Activated B cell treated with CpG ODN at 0.5 μM for 24 hours (primary cell): ENCODE measurements at regions of chr3 and their contacts with region 1.

Region 1: DNA sequence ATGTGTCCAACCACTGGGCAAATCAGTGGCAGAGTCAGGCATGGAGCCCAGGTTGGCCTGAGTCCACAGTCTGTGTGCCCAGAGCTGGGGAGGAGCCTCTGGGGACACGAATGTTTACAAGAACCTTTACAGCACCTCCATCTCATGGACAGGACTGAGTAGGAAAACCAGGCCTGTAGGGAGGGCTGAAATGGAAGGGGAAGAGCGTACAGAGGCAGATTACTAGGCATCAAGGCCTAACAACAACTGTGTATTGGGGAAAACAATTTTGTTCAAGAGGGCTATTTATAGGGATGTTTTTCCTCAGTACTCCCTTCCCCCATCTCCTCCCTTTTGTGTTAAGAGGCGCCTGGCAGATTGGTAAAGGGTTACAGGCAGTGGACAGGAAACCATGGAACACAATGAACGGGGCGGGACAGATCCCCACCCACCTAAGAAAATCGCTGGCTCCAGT is 15.1 kb upstream of the ARHGAP31 start:
- DNase-seq: no peak
- ATAC-seq: no peak
- H3K4me3 Mint-ChIP-seq: no peak overlapping the region
- H3K27ac Mint-ChIP-seq: no peak overlapping the region
- H3K4me1 Mint-ChIP-seq: peaks cover 3% of the 10 kb centered on the region
- H3K27me3 Mint-ChIP-seq: no peaks in the 10 kb centered on the region
- CTCF ChIP-seq: no peak

Region 2: GRCh38 chr3:119293871-119294695 is 15.0 kb after region 1 on chr3 and contains the start of gene ARHGAP31:
- CTCF ChIA-PET with region 1: no interaction called
- POLR2A ChIA-PET with region 1: interaction called, 3 read pairs
- intact Hi-C with region 1: loop called (anchors 1 kb)
- DNase-seq: peak; percentile 56
- ATAC-seq: peak; percentile 73
- H3K4me3 Mint-ChIP-seq: peak within 1 kb of the TSS; percentile 88
- H3K27ac Mint-ChIP-seq: peak within 1 kb of the TSS; percentile 90
- H3K4me1 Mint-ChIP-seq: peaks cover 61% of the 10 kb centered on the region
- H3K27me3 Mint-ChIP-seq: no peaks in the 10 kb centered on the region
- CTCF ChIP-seq: no peak
- total RNA-seq, gene ARHGAP31: 23.7 and 26.0 TPM in 2 replicates

Region 3: GRCh38 chr3:119343719-119344118 is 64.6 kb after region 1 on chr3:
- CTCF ChIA-PET with region 1: interaction called, 4 read pairs
- POLR2A ChIA-PET with region 1: no interaction called
- intact Hi-C with region 1: loop called (anchors 2 kb)
- DNase-seq: no peak
- ATAC-seq: peak; percentile 74
- H3K4me3 Mint-ChIP-seq: no peak overlapping the region
- H3K27ac Mint-ChIP-seq: peak overlapping the region; percentile 6
- H3K4me1 Mint-ChIP-seq: peaks cover 31% of the 10 kb centered on the region
- H3K27me3 Mint-ChIP-seq: no peaks in the 10 kb centered on the region
- CTCF ChIP-seq: no peak

Region 4: DNA sequence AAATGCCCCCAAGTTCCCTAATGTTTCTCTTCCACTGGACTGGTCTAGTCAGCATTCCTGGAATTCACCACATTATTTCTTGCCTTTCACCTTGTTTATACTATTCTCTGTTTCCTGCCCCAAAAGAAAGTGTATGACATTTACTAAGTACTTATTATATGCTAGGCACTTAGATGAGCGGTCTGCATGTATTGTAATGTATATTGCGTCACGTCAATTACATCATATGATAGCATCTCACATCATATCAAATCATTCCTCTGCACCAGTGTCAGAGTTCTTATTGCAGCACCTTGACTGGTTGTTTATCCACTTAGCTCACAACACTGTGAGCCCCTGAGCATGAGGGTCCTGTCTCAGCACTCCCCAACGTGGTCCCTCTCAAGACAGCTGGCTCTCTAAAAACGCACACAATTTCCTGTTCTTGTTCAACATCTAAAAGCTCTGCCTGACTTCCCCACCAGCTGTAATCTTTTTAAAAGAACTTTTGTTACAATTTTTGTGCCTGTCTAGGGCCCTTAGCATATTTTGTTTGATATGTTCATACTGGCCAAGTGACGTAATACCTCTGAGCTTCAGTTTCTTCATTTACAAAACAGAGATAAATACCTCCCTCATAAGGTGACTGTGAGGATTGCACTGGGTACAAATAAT is 73.8 kb after region 1 on chr3:
- CTCF ChIA-PET with region 1: interaction called, 50 read pairs
- POLR2A ChIA-PET with region 1: interaction called, 3 read pairs
- intact Hi-C with region 1: loop called (anchors 1 kb)
- DNase-seq: no peak
- ATAC-seq: peak; percentile 46
- H3K4me3 Mint-ChIP-seq: peak overlapping the region; percentile 41
- H3K27ac Mint-ChIP-seq: peak overlapping the region; percentile 47
- H3K4me1 Mint-ChIP-seq: peaks cover 47% of the 10 kb centered on the region
- H3K27me3 Mint-ChIP-seq: no peaks in the 10 kb centered on the region
- CTCF ChIP-seq: no peak

Region 5: GRCh38 chr3:120021523-120021922 is 742.4 kb after region 1 on chr3:
- CTCF ChIA-PET with region 1: no interaction called
- POLR2A ChIA-PET with region 1: no interaction called
- intact Hi-C with region 1: no loop called
- DNase-seq: no peak
- ATAC-seq: no peak
- H3K4me3 Mint-ChIP-seq: no peak overlapping the region
- H3K27ac Mint-ChIP-seq: no peak overlapping the region
- H3K4me1 Mint-ChIP-seq: peaks cover 71% of the 10 kb centered on the region
- H3K27me3 Mint-ChIP-seq: no peaks in the 10 kb centered on the region
- CTCF ChIP-seq: no peak